GM12878 (cell line): ENCODE measurements at regions of chr11 and their contacts with region 1.

Region 1: GRCh38 chr11:112280268-112281126 is 19.8 kb upstream of the PLET1 start:
- DNase-seq: peak; percentile 37
- ATAC-seq: peak; percentile 97
- H3K4me3 ChIP-seq: peak overlapping the region; percentile 61; the same call in 1 of the 2 replicates
- H3K27ac ChIP-seq: no peak overlapping the region
- H3K4me1 ChIP-seq: no peaks in the 10 kb centered on the region
- H3K27me3 ChIP-seq: no peaks in the 10 kb centered on the region
- CTCF ChIP-seq: peak; percentile 71 to 86 (median 74)
- EP300 ChIP-seq: no peak
- POLR2A ChIP-seq: peak; percentile 25; the same call in 1 of the 2 replicates
- RAD21 ChIP-seq: peak; percentile 80

Region 2: DNA sequence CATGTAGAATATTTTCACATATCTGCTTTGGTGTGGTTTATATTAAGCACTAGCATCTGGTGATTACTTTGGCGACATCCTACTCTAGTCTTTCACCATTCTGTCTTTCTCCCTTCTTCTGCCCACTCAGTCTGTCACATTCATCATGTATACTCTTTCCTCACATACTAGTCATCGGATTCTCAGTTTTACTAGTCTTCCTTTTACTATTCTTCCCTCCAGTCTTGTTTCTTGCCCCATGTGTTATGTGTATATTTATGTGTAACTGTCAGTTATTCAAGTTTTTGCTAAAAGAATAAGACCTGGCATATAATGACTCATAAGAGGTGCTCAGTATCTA is 347.9 kb before region 1 on chr11:
- CTCF ChIA-PET with region 1: interaction called, 15 read pairs
- POLR2A ChIA-PET with region 1: no interaction called
- RAD21 ChIA-PET with region 1: interaction called, 14 read pairs
- SMC1A ChIA-PET with region 1: interaction called, 8 read pairs
- in situ Hi-C with region 1: loop called (anchors 10 kb)
- intact Hi-C with region 1: loop called (anchors 2 kb)
- DNase-seq: no peak
- ATAC-seq: no peak
- H3K4me3 ChIP-seq: no peak overlapping the region
- H3K27ac ChIP-seq: no peak overlapping the region
- H3K4me1 ChIP-seq: peaks cover 9% of the 10 kb centered on the region
- H3K27me3 ChIP-seq: 0 out of 4 replicates have a peak, but pooled peaks cover 0 to under 1% of the 10 kb centered on the region in 2 experiments
- CTCF ChIP-seq: no peak
- EP300 ChIP-seq: no peak
- POLR2A ChIP-seq: no peak
- RAD21 ChIP-seq: no peak

Region 3: DNA sequence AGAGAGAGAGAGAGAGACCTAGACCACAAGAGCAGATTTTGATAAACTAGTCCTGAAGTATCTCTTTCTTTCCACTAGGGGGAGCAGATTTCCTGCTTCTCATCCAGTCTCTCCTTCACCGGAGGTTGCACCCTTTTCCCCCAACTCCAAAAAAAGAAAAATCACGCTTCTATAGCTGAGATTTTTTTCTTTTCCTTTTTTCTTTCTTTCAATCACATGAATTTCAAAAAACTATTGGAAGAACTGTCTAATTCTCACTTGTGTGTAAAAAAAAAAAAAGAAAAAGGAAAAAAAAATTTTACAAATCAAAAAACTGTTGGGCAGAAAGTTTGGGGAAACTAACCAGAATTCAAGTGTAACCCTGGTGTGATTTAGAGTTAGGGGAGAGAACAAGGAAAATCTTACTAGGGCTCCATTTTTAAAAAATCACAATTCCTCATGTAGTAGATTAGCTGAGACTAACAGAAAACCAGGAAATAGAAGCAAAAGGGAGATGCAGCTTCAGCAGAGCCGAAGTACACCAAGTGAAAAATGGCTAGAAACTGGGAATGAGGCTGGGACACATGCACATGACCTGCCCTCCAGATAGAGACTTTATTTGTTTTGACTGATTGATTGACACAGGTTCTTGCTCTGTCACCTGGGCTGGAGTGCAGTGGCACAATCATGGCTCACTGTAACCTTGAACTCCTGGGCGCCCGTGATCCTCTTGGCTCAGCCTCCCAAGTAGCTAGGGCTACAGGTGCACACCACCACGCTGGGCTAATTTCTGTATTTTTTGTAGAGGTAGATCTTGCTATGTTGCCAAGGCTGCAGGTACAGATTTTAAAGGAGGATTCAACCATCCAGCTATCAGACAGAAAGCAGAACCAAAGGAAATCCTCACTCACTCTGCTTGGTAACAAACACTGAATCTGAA is 166.7 kb before region 1 on chr11:
- CTCF ChIA-PET with region 1: interaction called, 121 read pairs
- POLR2A ChIA-PET with region 1: no interaction called
- RAD21 ChIA-PET with region 1: interaction called, 16 read pairs
- SMC1A ChIA-PET with region 1: interaction called, 29 read pairs
- in situ Hi-C with region 1: loop called (anchors 5 kb)
- intact Hi-C with region 1: loop called (anchors 1 kb)
- DNase-seq: no peak
- ATAC-seq: peak; percentile 74
- H3K4me3 ChIP-seq: no peak overlapping the region
- H3K27ac ChIP-seq: no peak overlapping the region
- H3K4me1 ChIP-seq: no peaks in the 10 kb centered on the region; the same call in 1 of the 2 replicates
- H3K27me3 ChIP-seq: no peaks in the 10 kb centered on the region
- CTCF ChIP-seq: peak; percentile 53 to 70 (median 59)
- EP300 ChIP-seq: no peak
- POLR2A ChIP-seq: no peak
- RAD21 ChIP-seq: peak; percentile 69

Region 4: DNA sequence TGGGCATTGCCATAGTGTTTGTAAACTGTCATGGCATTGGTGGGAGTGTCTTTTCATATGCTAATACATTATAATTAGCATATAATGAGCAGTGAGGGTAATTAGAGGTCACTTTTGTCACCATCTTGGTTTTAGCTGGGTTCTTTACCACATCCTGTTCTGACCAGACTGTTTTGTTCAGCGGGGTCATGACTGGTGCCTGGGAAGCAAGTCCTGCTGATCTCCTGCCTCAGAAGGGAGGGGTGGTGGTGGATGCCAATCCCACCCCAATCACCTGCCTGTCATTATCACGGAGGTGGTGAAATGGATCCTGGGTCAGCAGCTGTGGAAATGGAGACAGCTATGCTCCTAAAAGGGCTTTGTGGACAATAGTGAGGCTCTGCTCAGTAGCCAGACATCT is 147.8 kb before region 1 on chr11:
- CTCF ChIA-PET with region 1: no interaction called
- POLR2A ChIA-PET with region 1: no interaction called
- RAD21 ChIA-PET with region 1: no interaction called
- SMC1A ChIA-PET with region 1: no interaction called
- in situ Hi-C with region 1: no loop called
- intact Hi-C with region 1: no loop called
- DNase-seq: no peak
- ATAC-seq: peak; percentile 50; the same call in 2 of the 3 replicates
- H3K4me3 ChIP-seq: no peak overlapping the region
- H3K27ac ChIP-seq: no peak overlapping the region
- H3K4me1 ChIP-seq: 0 out of 2 replicates have a peak, but pooled peaks cover 2% of the 10 kb centered on the region
- H3K27me3 ChIP-seq: no peaks in the 10 kb centered on the region; a peak in 1 of 4 replicates
- CTCF ChIP-seq: no peak
- EP300 ChIP-seq: no peak
- POLR2A ChIP-seq: no peak
- RAD21 ChIP-seq: no peak

Region 5: DNA sequence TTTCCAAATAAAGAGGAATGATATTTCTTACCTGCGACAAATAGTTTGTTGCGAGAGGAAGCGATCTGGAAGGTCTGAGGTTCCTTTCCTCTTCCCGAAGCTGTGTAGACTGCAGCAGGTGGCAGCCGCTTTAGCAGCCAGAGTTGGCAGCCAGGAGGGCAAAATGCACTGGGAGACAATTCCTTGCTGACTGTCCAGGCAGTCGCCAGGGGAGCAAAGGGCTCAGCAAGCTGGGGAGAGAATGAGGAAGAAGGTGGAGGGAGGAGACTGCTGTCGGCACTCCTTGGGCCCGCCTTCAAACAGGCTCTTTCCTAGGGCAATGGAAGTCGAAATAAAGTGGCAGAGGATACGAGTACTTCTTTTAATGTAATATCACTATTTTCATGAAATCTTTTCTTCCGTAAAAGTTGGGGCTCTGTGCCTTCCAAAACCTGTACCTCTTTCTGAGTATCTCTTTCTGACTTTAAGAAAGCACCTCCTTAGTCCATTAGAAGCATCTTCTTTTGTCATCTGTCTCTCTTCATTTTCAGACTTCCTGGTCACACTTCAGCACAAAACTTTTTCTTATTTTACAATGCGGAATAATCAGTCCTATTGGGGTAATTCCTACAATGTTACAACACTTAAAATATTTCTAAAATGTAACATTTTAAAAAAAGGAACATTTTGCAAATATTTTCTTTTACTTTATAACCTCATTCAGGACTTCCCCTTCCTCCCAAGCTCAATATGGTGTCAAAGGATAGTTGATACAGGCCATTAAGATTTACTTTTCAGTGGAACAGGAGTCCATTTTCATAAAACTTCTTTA is 116.4 kb before region 1 on chr11 and contains the start of gene IL18:
- CTCF ChIA-PET with region 1: no interaction called
- POLR2A ChIA-PET with region 1: no interaction called
- RAD21 ChIA-PET with region 1: no interaction called
- SMC1A ChIA-PET with region 1: no interaction called
- in situ Hi-C with region 1: no loop called
- intact Hi-C with region 1: no loop called
- DNase-seq: no peak
- ATAC-seq: no peak
- H3K4me3 ChIP-seq: no peak within 1 kb of the TSS
- H3K27ac ChIP-seq: no peak within 1 kb of the TSS
- H3K4me1 ChIP-seq: no peaks in the 10 kb centered on the region
- H3K27me3 ChIP-seq: no peaks in the 10 kb centered on the region; a peak in 1 of 4 replicates
- CTCF ChIP-seq: no peak
- EP300 ChIP-seq: no peak
- POLR2A ChIP-seq: no peak
- RAD21 ChIP-seq: no peak
- polyA plus RNA-seq, gene IL18: 0.40 to 0.42 TPM

Region 6: GRCh38 chr11:112219476-112220232 is 60.8 kb before region 1 on chr11:
- CTCF ChIA-PET with region 1: interaction called, 314 read pairs
- POLR2A ChIA-PET with region 1: interaction called, 6 read pairs
- RAD21 ChIA-PET with region 1: interaction called, 62 read pairs
- SMC1A ChIA-PET with region 1: interaction called, 161 read pairs
- in situ Hi-C with region 1: loop called (anchors 5 kb)
- intact Hi-C with region 1: loop called (anchors 1 kb)
- DNase-seq: peak; percentile 56
- ATAC-seq: peak; percentile 98
- H3K4me3 ChIP-seq: no peak overlapping the region
- H3K27ac ChIP-seq: no peak overlapping the region
- H3K4me1 ChIP-seq: no peaks in the 10 kb centered on the region
- H3K27me3 ChIP-seq: no peaks in the 10 kb centered on the region
- CTCF ChIP-seq: peak; percentile 63 to 88 (median 68); a peak in 4 of 6 replicates
- EP300 ChIP-seq: no peak
- POLR2A ChIP-seq: no peak
- RAD21 ChIP-seq: peak; percentile 80

Region 7: GRCh38 chr11:112231952-112232351 is 48.5 kb before region 1 on chr11:
- CTCF ChIA-PET with region 1: interaction called, 314 read pairs
- POLR2A ChIA-PET with region 1: no interaction called
- RAD21 ChIA-PET with region 1: interaction called, 8 read pairs
- SMC1A ChIA-PET with region 1: interaction called, 161 read pairs
- in situ Hi-C with region 1: no loop called
- intact Hi-C with region 1: no loop called
- DNase-seq: no peak
- ATAC-seq: no peak
- H3K4me3 ChIP-seq: no peak overlapping the region
- H3K27ac ChIP-seq: no peak overlapping the region
- H3K4me1 ChIP-seq: peaks cover 13% of the 10 kb centered on the region
- H3K27me3 ChIP-seq: no peaks in the 10 kb centered on the region
- CTCF ChIP-seq: no peak
- EP300 ChIP-seq: no peak
- POLR2A ChIP-seq: no peak
- RAD21 ChIP-seq: no peak

Region 8: DNA sequence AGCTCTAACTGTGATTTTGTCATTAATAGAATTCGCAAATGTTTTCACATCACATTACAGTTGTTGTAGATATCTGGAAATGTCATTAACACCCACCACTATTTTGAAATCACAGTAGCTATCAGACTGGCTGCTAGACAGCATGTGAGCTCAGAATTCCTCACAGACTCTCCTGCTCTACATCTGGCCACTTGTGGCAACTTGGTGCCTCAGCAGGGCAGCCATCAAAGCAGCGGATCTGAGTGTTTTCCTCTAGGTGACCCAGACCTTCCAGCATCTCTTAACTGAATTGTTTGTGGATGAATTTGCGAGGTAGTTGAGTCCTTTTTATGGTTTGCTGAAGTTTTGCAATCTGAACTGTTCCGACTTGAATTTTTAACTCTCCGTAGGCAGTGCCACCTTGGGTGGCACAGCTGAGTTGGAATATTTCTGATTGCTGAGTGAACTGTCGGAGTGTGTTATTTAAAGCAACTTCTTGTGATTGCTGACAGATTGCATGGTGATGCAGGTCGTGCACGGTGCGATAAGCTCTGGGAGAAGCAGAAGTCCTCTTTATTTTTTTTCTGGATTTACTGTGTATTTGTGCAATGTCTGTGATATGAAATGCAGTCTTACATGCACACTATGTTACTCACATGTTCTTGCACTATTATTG is 94.1 kb after region 1 on chr11:
- CTCF ChIA-PET with region 1: no interaction called
- POLR2A ChIA-PET with region 1: no interaction called
- RAD21 ChIA-PET with region 1: no interaction called
- SMC1A ChIA-PET with region 1: no interaction called
- in situ Hi-C with region 1: no loop called
- intact Hi-C with region 1: no loop called
- DNase-seq: no peak
- ATAC-seq: no peak
- H3K4me3 ChIP-seq: no peak overlapping the region
- H3K27ac ChIP-seq: no peak overlapping the region
- H3K4me1 ChIP-seq: no peaks in the 10 kb centered on the region
- H3K27me3 ChIP-seq: no peaks in the 10 kb centered on the region
- CTCF ChIP-seq: no peak
- EP300 ChIP-seq: no peak
- POLR2A ChIP-seq: no peak
- RAD21 ChIP-seq: no peak